BJ (cell line): ENCODE measurements at regions of chr5 and their contacts with region 1.

Region 1: DNA sequence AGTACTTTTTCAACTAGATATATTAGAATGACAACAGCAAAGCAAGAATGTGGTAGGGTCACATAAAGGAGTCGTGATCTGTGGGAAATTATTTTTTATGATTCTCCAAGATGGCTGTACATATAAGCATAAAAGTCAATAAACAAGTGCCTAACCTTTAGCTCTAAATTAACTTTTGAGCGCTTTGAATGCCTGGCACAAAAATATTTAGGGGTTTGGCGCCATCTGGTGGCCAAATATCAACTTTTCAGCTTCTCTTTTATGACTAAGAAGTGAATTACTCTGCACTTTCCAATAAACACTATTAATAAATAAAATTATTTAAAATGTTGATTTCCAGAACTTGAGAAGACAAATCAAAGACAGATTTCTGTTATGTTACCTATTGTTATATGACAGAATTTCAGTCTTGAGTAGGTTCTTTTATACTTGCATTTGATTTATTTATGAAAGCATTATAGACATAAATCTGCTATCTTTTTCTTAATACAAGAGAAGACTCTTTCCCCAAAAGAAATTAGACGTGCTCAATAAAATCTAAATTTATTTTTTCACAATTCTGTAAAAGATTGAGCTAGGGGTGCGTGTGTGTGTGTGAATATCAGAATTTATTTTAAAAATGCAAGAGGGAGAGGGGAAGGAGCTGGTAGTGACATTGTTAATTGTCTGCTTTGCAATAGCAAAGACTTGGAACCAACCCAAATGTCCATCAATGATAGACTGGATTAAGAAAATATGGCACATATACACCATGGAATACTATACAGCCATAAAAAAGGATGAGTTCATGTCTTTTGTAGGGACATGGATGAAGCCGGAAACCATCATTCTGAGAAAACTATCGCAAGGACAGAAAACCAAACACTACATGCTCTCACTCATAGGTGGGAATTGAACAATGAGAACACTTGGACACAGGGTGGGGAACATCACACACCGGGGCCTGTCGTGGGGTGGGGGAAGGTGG is 36.7 kb upstream of the ARRDC3 start:
- DNase-seq: no peak
- H3K4me3 ChIP-seq: no peak overlapping the region
- H3K27me3 ChIP-seq: no peaks in the 10 kb centered on the region
- CTCF ChIP-seq: peak; percentile 53

Region 2: GRCh38 chr5:90866333-90866732 is 553.5 kb before region 1 on chr5:
- CTCF ChIA-PET with region 1: interaction called, 46 read pairs
- POLR2A ChIA-PET with region 1: no interaction called
- DNase-seq: no peak
- H3K4me3 ChIP-seq: no peak overlapping the region
- H3K27me3 ChIP-seq: no peaks in the 10 kb centered on the region
- CTCF ChIP-seq: peak; percentile 34

Region 3: DNA sequence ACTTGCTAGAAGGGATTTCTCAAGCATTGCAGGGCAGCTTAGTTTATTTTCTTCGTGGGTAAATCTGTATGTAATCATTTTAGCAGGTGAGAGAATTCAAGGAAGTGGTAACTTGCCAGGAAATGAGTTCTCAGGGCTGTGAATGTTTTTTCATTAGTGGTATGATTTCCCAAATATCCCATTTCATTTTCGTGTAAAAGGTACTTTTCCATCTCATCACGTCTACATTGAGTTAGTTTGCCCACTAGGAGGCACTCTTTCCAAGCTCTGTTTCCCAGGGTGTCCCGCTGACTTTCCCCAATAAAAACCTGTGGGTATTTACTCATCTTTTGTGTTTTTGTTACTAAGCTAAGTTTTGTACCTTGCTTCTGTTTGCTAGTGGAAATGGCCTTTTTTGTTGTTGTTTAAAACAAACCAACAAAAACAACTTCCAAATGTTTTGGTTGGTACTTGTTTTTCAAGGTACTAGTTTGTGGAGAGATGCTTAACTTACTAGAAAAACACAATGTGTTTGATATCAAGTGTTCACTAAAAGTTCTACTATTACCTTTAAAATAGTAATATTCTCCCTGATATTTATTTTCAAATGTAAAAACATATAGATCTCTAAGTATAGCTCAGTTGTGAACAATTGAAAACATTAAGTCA is 487.7 kb before region 1 on chr5:
- CTCF ChIA-PET with region 1: interaction called, 33 read pairs
- POLR2A ChIA-PET with region 1: no interaction called
- DNase-seq: no peak
- H3K4me3 ChIP-seq: no peak overlapping the region
- H3K27me3 ChIP-seq: no peaks in the 10 kb centered on the region
- CTCF ChIP-seq: peak; percentile 84

Region 4: DNA sequence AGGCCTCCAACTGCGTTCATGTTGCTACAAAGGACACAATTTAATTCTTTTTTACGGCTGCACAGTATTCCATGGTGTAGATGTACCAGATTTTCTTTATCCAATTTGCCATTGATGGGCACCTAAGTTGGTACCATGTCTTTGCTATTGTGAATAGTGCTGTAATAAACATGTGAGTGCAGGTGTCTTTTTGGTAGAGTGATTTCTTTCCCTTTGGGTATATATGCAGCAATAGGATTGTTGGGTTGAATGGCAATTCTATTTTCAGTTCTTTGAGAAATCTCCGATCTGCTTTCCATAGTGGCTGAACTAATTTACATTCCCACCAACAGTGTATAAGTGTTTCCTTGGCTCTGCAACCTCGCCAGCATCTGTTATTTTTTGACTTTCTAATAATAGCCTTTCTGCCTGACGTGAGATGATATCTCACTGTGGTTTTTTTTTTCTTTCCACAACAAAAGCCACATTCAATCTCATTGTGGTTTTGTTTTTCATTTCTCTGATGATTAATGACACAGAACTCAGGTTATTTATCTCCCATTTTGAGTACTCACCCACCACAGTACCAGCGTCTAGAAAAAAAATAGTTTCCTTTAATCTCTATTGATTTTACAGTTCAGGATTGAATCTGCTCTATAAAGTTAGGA is 58.7 kb before region 1 on chr5:
- CTCF ChIA-PET with region 1: no interaction called
- POLR2A ChIA-PET with region 1: no interaction called
- DNase-seq: no peak
- H3K4me3 ChIP-seq: no peak overlapping the region
- H3K27me3 ChIP-seq: no peaks in the 10 kb centered on the region
- CTCF ChIP-seq: no peak

Region 5: DNA sequence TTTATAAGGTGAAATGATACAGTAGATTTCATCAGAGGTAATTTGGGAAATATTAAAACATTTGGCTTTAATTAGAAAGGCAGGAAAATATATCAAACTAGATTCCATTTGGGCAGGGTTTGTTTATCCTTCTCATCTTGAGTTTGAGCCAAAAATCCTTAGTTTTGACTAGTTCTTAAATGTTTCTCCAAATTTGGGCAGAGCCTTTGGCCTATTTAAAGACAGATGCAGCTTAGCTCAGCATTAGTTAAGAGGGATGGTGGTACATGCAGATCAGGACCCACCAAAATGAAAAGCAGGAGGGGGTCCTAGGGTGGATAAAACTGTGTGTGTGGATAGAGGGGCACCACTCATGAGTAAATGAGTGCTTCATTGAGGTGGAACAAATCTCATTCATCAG is 16.4 kb before region 1 on chr5:
- CTCF ChIA-PET with region 1: interaction called, 20 read pairs
- POLR2A ChIA-PET with region 1: no interaction called
- DNase-seq: peak; percentile 58
- H3K4me3 ChIP-seq: no peak overlapping the region
- H3K27me3 ChIP-seq: no peaks in the 10 kb centered on the region
- CTCF ChIP-seq: no peak

Region 6: GRCh38 chr5:91408710-91409109 is 11.1 kb before region 1 on chr5:
- CTCF ChIA-PET with region 1: interaction called, 20 read pairs
- POLR2A ChIA-PET with region 1: no interaction called
- DNase-seq: no peak
- H3K4me3 ChIP-seq: no peak overlapping the region
- H3K27me3 ChIP-seq: no peaks in the 10 kb centered on the region
- CTCF ChIP-seq: no peak